ENCODE measurements at regions of chr11 and their contacts with region 1.

Region 1: GRCh38 chr11:30128269-30128932 is 102.4 kb upstream of the FSHB start:
- DNase-seq: peak; percentile 12
- ATAC-seq: no peak
- H3K4me3 ChIP-seq: no peak overlapping the region
- H3K27ac ChIP-seq: no peak overlapping the region
- H3K4me1 ChIP-seq: no peaks in the 10 kb centered on the region
- H3K27me3 ChIP-seq: no peaks in the 10 kb centered on the region
- CTCF ChIP-seq: peak; percentile 18 to 76 (median 61); a peak in 4 of 6 replicates
- POLR2A ChIP-seq: no peak
- RAD21 ChIP-seq: peak; percentile 27; the same call in 1 of the 2 replicates

Region 2: GRCh38 chr11:30107899-30108298 is 20.5 kb before region 1 on chr11:
- CTCF ChIA-PET with region 1: interaction called, 13 read pairs
- POLR2A ChIA-PET with region 1: no interaction called
- RAD21 ChIA-PET with region 1: no interaction called
- intact Hi-C with region 1: no loop called
- DNase-seq: no peak
- ATAC-seq: no peak
- H3K4me3 ChIP-seq: no peak overlapping the region
- H3K27ac ChIP-seq: no peak overlapping the region
- H3K4me1 ChIP-seq: no peaks in the 10 kb centered on the region
- H3K27me3 ChIP-seq: no peaks in the 10 kb centered on the region
- CTCF ChIP-seq: no peak
- POLR2A ChIP-seq: no peak
- RAD21 ChIP-seq: no peak

Region 3: GRCh38 chr11:30143098-30143705 is 14.8 kb after region 1 on chr11:
- CTCF ChIA-PET with region 1: interaction called, 37 read pairs
- POLR2A ChIA-PET with region 1: no interaction called
- RAD21 ChIA-PET with region 1: no interaction called
- intact Hi-C with region 1: no loop called
- DNase-seq: peak; percentile 16
- ATAC-seq: peak; percentile 67
- H3K4me3 ChIP-seq: no peak overlapping the region
- H3K27ac ChIP-seq: no peak overlapping the region
- H3K4me1 ChIP-seq: no peaks in the 10 kb centered on the region
- H3K27me3 ChIP-seq: no peaks in the 10 kb centered on the region
- CTCF ChIP-seq: peak; percentile 27 to 76 (median 56); a peak in 5 of 6 replicates
- POLR2A ChIP-seq: no peak
- RAD21 ChIP-seq: peak; percentile 44

Region 4: GRCh38 chr11:30314625-30315024 is 186.2 kb after region 1 on chr11:
- CTCF ChIA-PET with region 1: interaction called, 3 read pairs
- POLR2A ChIA-PET with region 1: no interaction called
- RAD21 ChIA-PET with region 1: no interaction called
- intact Hi-C with region 1: loop called (anchors 10 kb)
- DNase-seq: no peak
- ATAC-seq: peak; percentile 47; the same call in 1 of the 2 replicates
- H3K4me3 ChIP-seq: no peak overlapping the region
- H3K27ac ChIP-seq: no peak overlapping the region
- H3K4me1 ChIP-seq: no peaks in the 10 kb centered on the region
- H3K27me3 ChIP-seq: peaks cover 25% of the 10 kb centered on the region
- CTCF ChIP-seq: peak; percentile 25 to 52 (median 50); a peak in 5 of 6 replicates
- POLR2A ChIP-seq: no peak
- RAD21 ChIP-seq: peak; percentile 21; the same call in 1 of the 2 replicates